HepG2 (cell line): ENCODE measurements at regions of chr6 and their contacts with region 1.

Region 1: DNA sequence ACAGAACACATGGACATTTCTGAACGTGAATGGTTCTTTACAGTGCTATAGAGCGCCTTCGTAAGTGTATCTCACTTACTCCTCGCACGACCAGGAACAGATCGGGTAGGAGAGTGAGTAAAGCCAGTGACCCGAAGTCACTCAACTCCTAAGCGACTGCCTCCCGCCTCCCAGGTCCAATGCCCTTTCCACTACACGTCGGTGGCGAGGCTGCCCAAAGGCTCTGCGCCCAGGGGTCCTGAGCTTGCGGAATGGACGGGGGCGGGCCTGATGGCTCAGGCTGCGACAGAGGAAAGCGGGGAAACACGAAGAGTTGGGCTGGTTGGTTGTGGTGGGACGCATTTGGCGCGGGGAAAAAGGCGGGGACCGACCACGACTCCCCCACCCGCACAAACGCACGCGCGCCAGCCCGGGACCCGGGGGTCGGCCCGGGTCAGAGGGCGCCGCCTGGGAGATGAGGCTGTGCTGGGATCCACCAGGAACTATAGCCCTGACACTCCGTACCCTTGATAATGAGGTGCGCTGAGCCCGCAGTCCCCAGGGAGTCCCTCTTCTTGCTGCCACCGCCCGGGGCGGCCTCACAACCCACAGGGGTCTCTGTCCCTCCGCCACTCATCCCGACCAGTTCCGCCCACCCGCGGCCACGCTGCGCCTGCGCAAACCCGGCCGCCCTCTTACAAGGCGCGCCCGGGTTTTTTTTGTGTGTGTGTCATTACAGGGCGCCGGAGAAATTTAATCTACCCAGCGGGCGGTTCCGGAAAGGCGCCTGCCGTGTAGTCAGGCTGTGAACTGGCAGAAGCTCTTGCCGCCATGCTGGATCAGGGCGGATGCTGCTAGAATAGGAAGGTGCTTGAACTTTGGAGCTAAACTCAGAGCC is at the start of gene BLOC1S5:
- DNase-seq: peak; percentile 99
- ATAC-seq: peak; percentile 95
- H3K4me3 ChIP-seq: peak within 1 kb of the TSS; percentile 74 to 93 (median 92)
- H3K27ac ChIP-seq: peak within 1 kb of the TSS; percentile 85
- H3K4me1 ChIP-seq: peaks cover 39% of the 10 kb centered on the region
- H3K27me3 ChIP-seq: no peaks in the 10 kb centered on the region; a peak in 1 of 5 replicates
- CTCF ChIP-seq: peak; percentile 60
- EP300 ChIP-seq: peak; percentile 23 to 56; a peak in 2 of 4 replicates
- POLR2A ChIP-seq: peak; percentile 87 to 95
- RAD21 ChIP-seq: peak; percentile 56; the same call in 1 of the 2 replicates
- total RNA-seq, gene BLOC1S5: 41.5 and 63.5 TPM in 2 replicates

Region 2: DNA sequence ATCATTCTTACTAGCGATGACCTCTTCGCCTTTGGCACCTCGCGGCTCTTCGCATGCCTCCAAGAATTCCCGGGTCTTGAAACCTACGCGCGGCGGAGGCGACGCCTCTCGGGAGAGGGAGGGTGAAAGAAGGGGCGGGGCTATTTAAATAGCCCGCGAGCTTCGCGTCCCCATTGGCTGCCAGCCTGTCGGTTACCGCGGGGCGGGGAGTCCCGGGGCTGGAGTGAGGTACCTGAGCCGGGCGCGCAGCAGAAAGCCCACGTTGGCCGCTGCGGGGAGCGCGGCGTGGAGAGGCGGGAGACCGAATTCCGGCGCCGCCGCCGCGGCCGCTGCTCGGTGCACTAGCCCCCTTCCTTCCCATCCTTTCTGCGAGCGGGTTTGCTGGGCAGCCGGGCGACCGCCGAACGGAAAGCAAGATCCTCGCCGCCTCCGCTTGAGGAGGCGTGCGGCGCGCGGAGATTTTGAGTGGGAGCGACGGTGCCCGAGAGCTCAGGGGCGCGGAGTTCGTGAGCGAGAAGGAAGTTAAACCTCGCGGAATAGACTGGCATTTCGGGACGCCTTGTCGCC is 338.1 kb before region 1 on chr6 and contains the start of gene BMP6:
- CTCF ChIA-PET with region 1: interaction called, 13 read pairs
- POLR2A ChIA-PET with region 1: interaction called, 3 read pairs
- in situ Hi-C with region 1: loop called (anchors 10 kb)
- intact Hi-C with region 1: loop called (anchors 1 kb)
- DNase-seq: peak; percentile 67
- ATAC-seq: peak; percentile 87
- H3K4me3 ChIP-seq: peak within 1 kb of the TSS; percentile 27 to 67 (median 31); a peak in 5 of 6 replicates
- H3K27ac ChIP-seq: no peak within 1 kb of the TSS
- H3K4me1 ChIP-seq: peaks cover 38% of the 10 kb centered on the region
- H3K27me3 ChIP-seq: peaks cover 21 to 74% of the 10 kb centered on the region in 2 experiments; a peak in 4 of 5 replicates
- CTCF ChIP-seq: 0 out of 2 replicates have a peak, but pooled peaks have one; percentile 10
- EP300 ChIP-seq: no peak
- POLR2A ChIP-seq: no peak
- RAD21 ChIP-seq: no peak
- total RNA-seq, gene BMP6: 0.09 TPM in 1 of 2 replicates, not detected in the other

Region 3: DNA sequence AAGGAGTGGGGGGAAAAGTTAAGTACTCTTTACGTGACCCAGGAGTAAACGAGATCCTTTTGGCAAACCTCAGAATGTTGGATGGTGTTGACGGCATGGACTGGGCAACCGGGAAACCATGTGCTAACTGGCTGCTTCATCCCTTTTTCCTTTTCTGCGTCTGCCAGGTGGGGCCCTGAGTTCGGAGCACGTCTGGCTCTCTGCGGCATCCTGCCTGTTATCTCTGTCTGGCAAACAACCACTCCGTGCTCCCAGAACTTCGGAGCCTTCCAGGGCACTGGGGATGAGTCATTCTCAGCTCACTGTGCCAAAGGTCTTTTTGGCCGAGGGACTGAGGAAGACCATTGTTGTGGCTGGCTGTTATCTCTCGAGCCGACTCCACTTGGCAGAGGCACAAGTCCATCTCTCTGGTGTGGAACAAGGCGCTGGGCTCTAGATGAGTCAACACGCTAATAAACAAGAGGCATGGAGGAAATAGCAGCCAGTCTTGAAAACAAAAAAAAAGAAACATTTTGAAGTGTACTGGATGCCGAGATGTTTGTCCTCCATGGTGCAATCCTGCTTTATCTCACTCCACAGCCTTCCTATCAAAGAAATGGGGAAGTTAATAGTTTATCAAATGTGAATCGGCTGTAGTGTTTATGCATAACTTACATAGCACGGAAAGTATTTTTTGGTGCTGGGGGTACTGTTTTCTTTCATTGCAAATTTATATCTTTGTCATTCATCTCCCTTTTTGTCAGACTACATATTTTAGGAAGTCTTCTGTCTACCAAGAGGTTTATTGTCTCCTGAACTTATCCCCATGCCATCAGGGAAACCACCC is 88.8 kb before region 1 on chr6:
- CTCF ChIA-PET with region 1: no interaction called
- POLR2A ChIA-PET with region 1: interaction called, 5 read pairs
- in situ Hi-C with region 1: no loop called
- intact Hi-C with region 1: loop called (anchors 1 kb)
- DNase-seq: peak; percentile 100
- ATAC-seq: peak; percentile 97
- H3K4me3 ChIP-seq: peak overlapping the region; percentile 18 to 49 (median 44); a peak in 5 of 6 replicates
- H3K27ac ChIP-seq: peak overlapping the region; percentile 73
- H3K4me1 ChIP-seq: peaks cover 36% of the 10 kb centered on the region
- H3K27me3 ChIP-seq: no peaks in the 10 kb centered on the region
- CTCF ChIP-seq: peak; percentile 31; the same call in 1 of the 2 replicates
- EP300 ChIP-seq: peak; percentile 22 to 94; a peak in 3 of 4 replicates
- POLR2A ChIP-seq: peak in 1 of 2 experiments; percentile 45; a peak in 2 of 4 replicates
- RAD21 ChIP-seq: peak; percentile 35; the same call in 1 of the 2 replicates

Region 4: DNA sequence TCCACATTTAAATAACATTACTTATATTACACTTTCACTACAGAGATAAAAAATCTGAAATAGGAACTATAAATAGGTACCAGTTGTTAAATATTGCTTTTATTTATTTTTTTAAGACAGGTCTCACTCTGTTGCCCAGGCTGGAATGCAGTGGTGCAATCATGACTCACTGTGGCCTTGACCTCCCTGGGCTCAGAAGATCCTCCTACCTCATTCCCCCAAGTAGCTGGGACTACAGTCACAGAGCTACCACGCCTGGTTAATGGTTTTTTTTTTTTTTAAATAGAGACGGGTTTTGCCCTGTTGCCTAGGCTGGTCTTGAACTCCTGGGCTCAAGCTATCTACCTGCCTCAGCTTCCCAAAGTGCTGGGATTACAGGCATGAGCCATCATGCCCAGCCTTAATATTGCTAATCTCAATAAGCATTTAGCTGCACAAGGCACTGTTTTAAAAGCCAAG is 21.1 kb after region 1 on chr6:
- CTCF ChIA-PET with region 1: interaction called, 5 read pairs
- POLR2A ChIA-PET with region 1: interaction called, 40 read pairs
- in situ Hi-C with region 1: no loop called
- intact Hi-C with region 1: loop called (anchors 1 kb)
- DNase-seq: peak; percentile 97
- ATAC-seq: peak; percentile 96
- H3K4me3 ChIP-seq: peak overlapping the region in 1 of 3 experiments; percentile 4; a peak in 1 of 6 replicates
- H3K27ac ChIP-seq: peak overlapping the region; percentile 85
- H3K4me1 ChIP-seq: peaks cover 64% of the 10 kb centered on the region
- H3K27me3 ChIP-seq: no peaks in the 10 kb centered on the region
- CTCF ChIP-seq: no peak
- EP300 ChIP-seq: peak; percentile 90 to 95
- POLR2A ChIP-seq: no peak
- RAD21 ChIP-seq: no peak; the same call in 1 of the 2 replicates

Region 5: DNA sequence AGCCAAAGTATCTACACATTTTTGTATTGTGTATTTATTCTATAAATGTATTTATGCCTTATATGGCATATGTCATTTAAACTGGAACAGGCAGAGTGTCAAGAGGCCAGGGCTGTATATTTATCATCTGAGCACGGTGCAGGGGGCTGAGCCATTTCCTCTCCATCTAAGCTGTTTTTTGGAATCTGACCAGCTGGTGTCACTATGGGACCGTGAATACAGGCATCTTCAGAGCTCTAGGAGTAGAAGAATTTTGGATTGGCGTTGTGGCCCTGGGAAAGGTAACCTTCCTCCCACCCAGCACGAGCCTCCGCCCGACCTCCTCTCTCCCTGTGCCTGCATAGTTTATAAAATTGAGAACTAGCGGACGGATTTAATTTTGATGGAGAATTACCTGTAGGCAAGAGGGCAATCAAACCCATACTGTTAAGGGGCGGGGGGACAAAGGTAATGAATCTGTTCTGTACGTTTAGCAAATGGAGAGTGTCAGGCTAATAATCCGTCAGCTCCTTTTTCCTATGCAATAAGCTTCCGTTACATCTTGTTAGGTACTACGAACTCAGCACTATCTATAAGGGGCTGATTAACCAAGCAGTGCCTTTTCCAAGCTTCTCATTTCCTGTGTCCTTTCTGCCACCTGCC is 67.4 kb after region 1 on chr6:
- CTCF ChIA-PET with region 1: no interaction called
- POLR2A ChIA-PET with region 1: no interaction called
- in situ Hi-C with region 1: no loop called
- intact Hi-C with region 1: loop called (anchors 2 kb)
- DNase-seq: peak; percentile 77
- ATAC-seq: peak; percentile 97
- H3K4me3 ChIP-seq: no peak overlapping the region
- H3K27ac ChIP-seq: no peak overlapping the region
- H3K4me1 ChIP-seq: peaks cover 4% of the 10 kb centered on the region
- H3K27me3 ChIP-seq: peaks cover 0 to 4% of the 10 kb centered on the region in 2 experiments; a peak in 1 of 5 replicates
- CTCF ChIP-seq: peak; percentile 90
- EP300 ChIP-seq: no peak
- POLR2A ChIP-seq: no peak
- RAD21 ChIP-seq: peak; percentile 92